ENCODE measurements at regions of chr9 and their contacts with region 1.

Region 1: DNA sequence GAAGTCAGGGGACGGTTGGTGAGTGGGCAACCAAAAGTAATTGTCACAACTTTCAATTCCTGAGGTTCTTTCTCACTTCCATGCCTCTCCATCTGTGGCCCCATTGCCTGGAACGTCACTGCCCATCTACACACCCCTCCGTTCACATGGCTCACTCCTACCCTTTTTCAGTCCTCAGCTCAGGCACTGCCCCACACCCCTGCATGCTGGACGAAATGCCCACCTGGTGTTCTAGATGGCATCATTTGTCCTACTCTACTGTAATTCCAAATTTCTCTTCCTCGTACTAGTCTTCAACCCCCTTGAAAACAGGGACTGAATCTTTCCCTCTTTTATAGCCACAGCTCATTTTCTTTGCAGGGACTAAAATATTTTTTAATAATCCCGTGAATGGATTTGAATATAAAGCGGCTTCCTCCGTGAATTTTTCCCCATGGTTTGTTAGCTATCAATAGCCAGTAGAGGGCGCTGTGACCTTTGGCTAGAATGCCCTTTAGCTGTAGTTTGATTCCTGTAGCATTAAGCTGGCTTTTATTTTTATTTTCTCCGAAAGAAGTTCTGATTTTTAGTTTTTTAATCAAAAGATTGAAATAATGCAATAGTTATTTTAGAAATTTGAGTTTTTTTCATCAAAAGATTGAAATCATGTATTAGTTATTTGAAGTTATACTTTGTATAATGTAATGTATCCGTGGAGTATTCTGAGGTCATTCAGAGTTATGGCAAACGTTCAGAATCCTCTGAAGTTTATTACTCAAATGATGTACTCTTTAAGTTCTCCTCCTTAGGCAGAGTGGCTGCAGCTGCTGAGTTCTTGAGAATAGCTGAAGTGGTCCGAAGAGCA is 232.1 kb downstream of the SH3GL2 start:
- DNase-seq: peak; percentile 44
- H3K4me3 Mint-ChIP-seq: no peak overlapping the region
- H3K27ac Mint-ChIP-seq: no peak overlapping the region
- H3K4me1 Mint-ChIP-seq: no peaks in the 10 kb centered on the region
- H3K27me3 Mint-ChIP-seq: peaks cover 4% of the 10 kb centered on the region

Region 2: GRCh38 chr9:17824191-17824590 is 13.2 kb after region 1 on chr9:
- CTCF ChIA-PET with region 1: interaction called, 13 read pairs
- POLR2A ChIA-PET with region 1: no interaction called
- intact Hi-C with region 1: no loop called
- DNase-seq: no peak
- H3K4me3 Mint-ChIP-seq: no peak overlapping the region
- H3K27ac Mint-ChIP-seq: no peak overlapping the region
- H3K4me1 Mint-ChIP-seq: no peaks in the 10 kb centered on the region
- H3K27me3 Mint-ChIP-seq: no peaks in the 10 kb centered on the region

Region 3: DNA sequence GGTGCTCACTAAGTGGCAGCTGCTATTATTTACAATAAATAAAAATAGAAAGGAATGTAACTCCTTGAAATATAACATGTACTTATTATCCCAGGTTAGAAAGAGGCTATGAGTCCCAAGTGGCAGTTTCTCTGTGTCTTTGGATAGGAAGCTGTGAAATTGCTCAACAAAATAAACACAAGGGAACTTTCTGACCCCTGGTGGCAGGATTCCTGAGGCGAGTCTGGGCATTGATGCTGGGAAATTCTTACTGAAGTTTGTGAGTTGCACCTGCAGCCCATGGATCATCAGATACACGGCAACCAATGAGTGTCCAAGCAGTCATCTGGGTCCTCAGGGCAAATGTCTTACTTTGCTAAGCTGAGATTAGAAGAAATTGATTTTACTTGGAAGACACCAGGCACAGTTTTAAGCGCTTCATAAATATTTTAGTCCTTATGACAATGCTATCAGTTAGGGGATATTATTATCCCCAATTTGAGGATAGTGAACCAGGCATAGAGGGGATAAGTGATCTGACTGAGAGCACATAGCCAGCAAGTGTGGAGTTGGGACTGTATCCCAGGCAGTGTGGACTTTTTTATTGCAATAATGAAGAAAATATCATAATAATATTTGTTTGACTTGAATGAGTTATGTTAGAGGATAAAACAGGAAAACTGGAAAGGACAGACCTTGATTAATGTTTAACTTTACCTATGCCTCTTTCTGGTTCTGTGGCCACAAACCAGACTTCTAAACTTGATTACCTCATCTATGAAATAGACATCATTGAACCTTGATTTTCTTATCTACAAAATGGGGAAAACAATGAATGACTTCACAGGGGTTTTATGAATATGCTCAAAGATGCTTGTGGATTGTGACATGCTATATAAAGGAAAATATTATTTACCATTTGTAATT is 397.5 kb after region 1 on chr9:
- CTCF ChIA-PET with region 1: interaction called, 15 read pairs
- POLR2A ChIA-PET with region 1: no interaction called
- intact Hi-C with region 1: loop called (anchors 2 kb)
- DNase-seq: no peak
- H3K4me3 Mint-ChIP-seq: no peak overlapping the region
- H3K27ac Mint-ChIP-seq: no peak overlapping the region
- H3K4me1 Mint-ChIP-seq: no peaks in the 10 kb centered on the region
- H3K27me3 Mint-ChIP-seq: peaks cover 2% of the 10 kb centered on the region

Region 4: GRCh38 chr9:18442629-18443491 is 631.9 kb after region 1 on chr9:
- CTCF ChIA-PET with region 1: interaction called, 7 read pairs
- POLR2A ChIA-PET with region 1: no interaction called
- intact Hi-C with region 1: loop called (anchors 2 kb)
- DNase-seq: peak; percentile 65
- H3K4me3 Mint-ChIP-seq: no peak overlapping the region
- H3K27ac Mint-ChIP-seq: no peak overlapping the region
- H3K4me1 Mint-ChIP-seq: peaks cover 3% of the 10 kb centered on the region
- H3K27me3 Mint-ChIP-seq: peaks cover 11% of the 10 kb centered on the region

Region 5: GRCh38 chr9:19028835-19029451 is 1218.0 kb after region 1 on chr9:
- CTCF ChIA-PET with region 1: interaction called, 4 read pairs
- POLR2A ChIA-PET with region 1: no interaction called
- intact Hi-C with region 1: loop called (anchors 5 kb)
- DNase-seq: peak; percentile 25
- H3K4me3 Mint-ChIP-seq: no peak overlapping the region
- H3K27ac Mint-ChIP-seq: no peak overlapping the region
- H3K4me1 Mint-ChIP-seq: peaks cover 8% of the 10 kb centered on the region
- H3K27me3 Mint-ChIP-seq: peaks cover 14% of the 10 kb centered on the region

Measured in activated CD4-positive, alpha-beta memory T cell treated with anti-CD3 and anti-CD28 coated beads for 36 hours (primary cell).